ENCODE measurements at regions of chr12 and their contacts with region 1.

Region 1: GRCh38 chr12:32051559-32052414 is 54.9 kb upstream of the BICD1 start:
- DNase-seq: peak; percentile 71 to 99
- H3K4me3 ChIP-seq: no peak overlapping the region
- H3K27ac ChIP-seq: peak overlapping the region; percentile 71
- H3K4me1 ChIP-seq: peaks cover 21% of the 10 kb centered on the region
- H3K27me3 ChIP-seq: no peaks in the 10 kb centered on the region
- CTCF ChIP-seq: no peak

Region 2: GRCh38 chr12:31650927-31651326 is 400.9 kb before region 1 on chr12:
- CTCF ChIA-PET with region 1: no interaction called
- POLR2A ChIA-PET with region 1: no interaction called
- intact Hi-C with region 1: loop called (anchors 5 kb)
- DNase-seq: no peak
- H3K4me3 ChIP-seq: no peak overlapping the region
- H3K27ac ChIP-seq: no peak overlapping the region
- H3K4me1 ChIP-seq: peaks cover 5% of the 10 kb centered on the region; the same call in 1 of the 2 replicates
- H3K27me3 ChIP-seq: no peaks in the 10 kb centered on the region
- CTCF ChIP-seq: no peak

Region 3: GRCh38 chr12:31682136-31682962 is 369.4 kb before region 1 on chr12:
- CTCF ChIA-PET with region 1: no interaction called
- POLR2A ChIA-PET with region 1: no interaction called
- intact Hi-C with region 1: loop called (anchors 1 kb)
- DNase-seq: peak; percentile 68 to 72
- H3K4me3 ChIP-seq: no peak overlapping the region
- H3K27ac ChIP-seq: no peak overlapping the region
- H3K4me1 ChIP-seq: no peaks in the 10 kb centered on the region
- H3K27me3 ChIP-seq: no peaks in the 10 kb centered on the region
- CTCF ChIP-seq: peak; percentile 87

Region 4: DNA sequence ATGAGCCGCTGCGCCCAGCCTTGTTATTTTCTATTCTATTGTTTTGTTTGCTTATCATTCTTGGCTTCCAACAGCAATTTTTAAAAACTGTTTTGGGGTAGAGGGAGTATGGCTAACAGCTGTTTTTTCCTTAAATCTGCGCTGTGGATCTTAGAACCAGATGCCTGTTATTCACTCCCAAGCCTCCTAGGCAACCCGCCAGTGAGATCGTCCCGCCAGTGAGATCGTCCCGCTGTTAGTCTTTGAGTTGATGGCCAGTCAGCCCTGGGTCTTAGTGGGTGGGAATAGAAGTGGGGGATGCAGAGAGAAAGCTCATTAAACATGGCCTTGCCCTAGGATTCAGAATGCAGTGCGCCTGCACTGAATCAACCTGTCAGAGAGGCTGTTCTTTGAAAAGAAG is 12.4 kb before region 1 on chr12:
- CTCF ChIA-PET with region 1: no interaction called
- POLR2A ChIA-PET with region 1: no interaction called
- intact Hi-C with region 1: no loop called
- DNase-seq: no peak
- H3K4me3 ChIP-seq: no peak overlapping the region
- H3K27ac ChIP-seq: no peak overlapping the region
- H3K4me1 ChIP-seq: no peaks in the 10 kb centered on the region
- H3K27me3 ChIP-seq: no peaks in the 10 kb centered on the region
- CTCF ChIP-seq: no peak

Measured in PC-9 (cell line).